ENCODE measurements at regions of chr1 and their contacts with region 1.

Region 1: GRCh38 chr1:170929835-170930554 is 5.3 kb upstream of the MROH9 start:
- DNase-seq: peak in 1 of 3 donors; percentile 32
- ATAC-seq: peak; percentile 87
- H3K4me3 ChIP-seq: no peak overlapping the region
- H3K4me1 ChIP-seq: no peaks in the 10 kb centered on the region
- CTCF ChIP-seq: peak; percentile 37

Region 2: GRCh38 chr1:170685166-170685565 is 244.8 kb before region 1 on chr1:
- intact Hi-C with region 1: loop called in 1 of 2 experiments (anchors 5 kb)
- DNase-seq: no peak
- ATAC-seq: no peak
- H3K4me3 ChIP-seq: no peak overlapping the region
- H3K4me1 ChIP-seq: no peaks in the 10 kb centered on the region
- CTCF ChIP-seq: no peak

Region 3: GRCh38 chr1:170986901-170987300 is 56.9 kb after region 1 on chr1:
- intact Hi-C with region 1: no loop called
- DNase-seq: no peak
- ATAC-seq: no peak
- H3K4me3 ChIP-seq: no peak overlapping the region
- H3K4me1 ChIP-seq: no peaks in the 10 kb centered on the region
- CTCF ChIP-seq: no peak

Measured in mucosa of descending colon (tissue), 3 donors.